Naive thymus-derived CD4-positive, alpha-beta T cell (primary cell): ENCODE measurements at regions of chr10 and their contacts with region 1.

Region 1: DNA sequence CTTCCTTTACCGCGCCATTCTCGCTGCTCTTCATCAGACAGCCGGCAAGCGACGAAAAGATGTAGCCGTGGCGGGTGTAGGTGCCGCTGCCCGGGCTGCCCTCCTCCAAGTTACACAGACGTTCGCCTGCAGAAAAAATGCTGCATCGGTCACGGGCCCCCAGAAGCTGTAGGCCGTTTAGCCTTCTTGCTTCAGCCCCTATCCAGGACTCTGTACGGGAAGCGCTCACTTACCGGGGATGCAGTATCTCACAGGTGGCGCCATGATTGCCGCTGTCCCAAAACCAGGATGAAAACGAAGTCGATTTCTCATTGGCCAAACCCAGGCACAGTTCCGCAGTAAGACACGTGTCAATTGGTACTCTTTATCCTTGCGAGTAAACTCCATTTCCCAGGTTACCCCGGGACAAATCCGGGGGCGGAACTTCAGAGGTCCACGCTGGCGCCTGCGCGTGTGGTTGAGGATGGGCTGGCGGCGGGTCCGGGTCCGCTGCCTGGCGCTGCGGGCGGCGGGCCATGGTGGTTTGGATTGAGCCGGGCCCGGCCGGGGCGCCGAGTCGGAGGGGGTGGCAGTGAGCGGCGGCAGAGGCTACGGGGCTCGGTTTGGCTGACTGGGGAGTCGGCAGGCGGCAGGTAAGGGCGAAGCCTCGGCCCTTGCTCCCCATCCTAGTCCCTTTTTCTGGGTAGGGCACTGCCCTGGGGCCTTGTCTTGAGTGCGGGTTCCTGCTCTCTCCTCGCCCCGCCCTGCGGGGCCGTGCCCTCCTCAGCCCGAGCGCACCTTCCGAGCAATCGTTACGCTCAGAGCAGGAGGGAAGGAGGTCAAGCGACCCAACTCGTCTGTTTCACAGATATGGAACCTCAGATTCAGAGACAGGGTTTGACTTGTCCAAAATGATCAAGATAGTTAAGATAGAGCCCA is at the starts of genes EXOSC1 and ZDHHC16:
- DNase-seq: peak; percentile 67 to 93 (median 89)
- ATAC-seq: peak; percentile 99
- H3K4me3 ChIP-seq: peak within 1 kb of the TSS; percentile 98
- H3K4me3 Mint-ChIP-seq: peak within 1 kb of the TSS; percentile 89 to 99 (median 98)
- H3K27ac ChIP-seq: peak within 1 kb of the TSS; percentile 80
- H3K27ac Mint-ChIP-seq: peak within 1 kb of the TSS; percentile 86 to 97 (median 93)
- H3K4me1 ChIP-seq: peaks cover 19 to 29% of the 10 kb centered on the region in 2 donors
- H3K4me1 Mint-ChIP-seq: peaks cover 32 to 69% (median 44%) of the 10 kb centered on the region in 7 donors
- H3K27me3 ChIP-seq: no peaks in the 10 kb centered on the region
- H3K27me3 Mint-ChIP-seq: no peaks in the 10 kb centered on the region
- total RNA-seq, gene EXOSC1: 32.6 to 65.4 (median 53.2) TPM
- total RNA-seq, gene ZDHHC16: 13.2 to 38.8 (median 26.8) TPM

Region 2: DNA sequence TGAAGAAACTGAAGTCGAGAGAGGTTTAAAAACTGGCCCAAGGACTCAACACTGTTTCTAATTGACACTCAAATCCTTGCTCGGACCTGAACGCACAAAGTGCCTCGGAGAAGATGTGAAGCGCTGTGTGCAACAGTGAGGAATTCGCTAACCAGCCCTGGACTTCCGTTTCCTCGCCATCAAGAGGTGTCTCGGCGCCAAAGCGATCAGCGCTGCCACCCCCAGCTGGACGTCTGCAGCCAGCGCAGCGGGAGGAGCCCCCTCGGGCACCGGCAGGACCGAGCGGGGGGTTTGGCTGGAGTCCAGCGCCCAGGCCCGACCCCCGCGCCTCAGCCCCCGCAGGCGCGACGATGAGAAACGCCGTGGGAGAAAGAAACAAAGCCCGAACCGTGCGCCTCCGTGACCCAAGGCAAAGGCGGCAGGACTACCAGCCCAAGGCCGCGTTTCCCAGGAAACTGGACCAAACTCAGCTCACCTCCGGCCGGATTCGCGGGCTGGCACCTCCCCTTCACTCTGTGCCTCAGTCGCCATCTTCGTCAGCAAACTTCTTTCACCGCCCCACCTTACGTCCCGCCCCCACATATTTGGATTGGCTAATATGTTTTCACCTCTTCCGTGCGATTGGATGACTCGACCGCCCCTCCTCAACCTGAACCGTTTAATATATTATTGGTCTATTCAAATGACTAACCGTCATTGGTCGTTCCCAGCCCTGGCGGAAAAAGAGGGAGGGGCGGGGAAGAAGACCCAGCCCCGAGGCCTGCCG is 153.7 kb before region 1 on chr10 and contains the start of gene ARHGAP19:
- CTCF ChIA-PET with region 1: no interaction called
- POLR2A ChIA-PET with region 1: no interaction called
- intact Hi-C with region 1: loop called (anchors 1 kb)
- DNase-seq: peak; percentile 65 to 97 (median 95)
- ATAC-seq: peak; percentile 100
- H3K4me3 ChIP-seq: peak within 1 kb of the TSS; percentile 88
- H3K4me3 Mint-ChIP-seq: peak within 1 kb of the TSS; percentile 83 to 97 (median 95)
- H3K27ac ChIP-seq: peak within 1 kb of the TSS; percentile 83
- H3K27ac Mint-ChIP-seq: peak within 1 kb of the TSS; percentile 32 to 98 (median 92)
- H3K4me1 ChIP-seq: peaks cover 4 to 8% of the 10 kb centered on the region in 2 donors
- H3K4me1 Mint-ChIP-seq: peaks cover 17 to 26% (median 24%) of the 10 kb centered on the region in 7 donors
- H3K27me3 ChIP-seq: no peaks in the 10 kb centered on the region
- H3K27me3 Mint-ChIP-seq: peaks cover 0 to 4% (median 0%) of the 10 kb centered on the region in 5 donors
- total RNA-seq, gene ARHGAP19: 12.8 to 40.1 (median 16.1) TPM

Region 3: DNA sequence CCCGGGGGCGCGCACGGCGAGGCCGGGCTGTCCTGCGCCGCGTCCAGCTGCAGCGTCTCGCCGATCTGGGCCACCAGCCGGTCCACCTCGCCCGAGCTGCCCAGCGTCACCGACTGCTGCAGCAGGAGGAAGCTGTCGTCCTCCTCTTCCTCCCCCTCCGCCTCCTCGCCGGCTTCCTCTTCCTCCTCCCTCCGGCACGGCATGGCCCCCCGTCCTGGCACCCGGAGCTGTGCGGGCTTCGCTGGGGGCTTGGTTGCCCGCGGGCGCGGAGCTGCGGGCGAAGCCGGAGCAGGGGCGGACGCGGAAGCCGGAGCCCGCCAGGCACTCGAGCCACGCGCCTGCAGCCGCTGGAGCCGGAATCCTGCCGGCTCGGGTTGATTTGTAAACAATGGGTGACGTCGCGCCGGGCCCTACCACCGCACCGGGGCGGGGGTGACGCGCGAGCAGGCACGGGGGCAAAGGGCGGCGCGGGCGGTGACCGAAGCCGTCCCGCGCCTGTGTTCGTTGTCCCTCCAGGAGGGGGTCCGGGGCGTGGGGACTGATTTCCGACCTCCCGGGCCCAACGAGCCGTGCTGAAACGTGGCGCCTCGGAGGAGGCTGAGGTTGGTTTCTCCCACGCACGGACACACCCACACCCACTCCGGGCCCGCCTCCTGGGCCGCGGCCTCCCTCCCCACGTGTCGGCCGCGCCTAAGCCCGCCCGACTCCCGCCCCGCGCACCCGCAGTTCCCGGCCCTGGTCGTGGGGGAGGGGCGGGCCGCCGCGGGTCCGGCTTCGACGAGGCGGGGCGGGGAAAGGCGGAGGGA is 111.4 kb before region 1 on chr10 and contains the start of gene FRAT2:
- CTCF ChIA-PET with region 1: no interaction called
- POLR2A ChIA-PET with region 1: no interaction called
- intact Hi-C with region 1: loop called in 1 of 2 experiments (anchors 5 kb)
- DNase-seq: peak; percentile 85 to 96 (median 92)
- ATAC-seq: peak; percentile 94
- H3K4me3 ChIP-seq: peak within 1 kb of the TSS; percentile 78
- H3K4me3 Mint-ChIP-seq: peak within 1 kb of the TSS; percentile 88 to 98 (median 94)
- H3K27ac ChIP-seq: peak within 1 kb of the TSS; percentile 97
- H3K27ac Mint-ChIP-seq: peak within 1 kb of the TSS; percentile 89 to 97 (median 93)
- H3K4me1 ChIP-seq: peaks cover 20 to 24% of the 10 kb centered on the region in 2 donors
- H3K4me1 Mint-ChIP-seq: peaks cover 28 to 48% (median 42%) of the 10 kb centered on the region in 7 donors
- H3K27me3 ChIP-seq: no peaks in the 10 kb centered on the region
- H3K27me3 Mint-ChIP-seq: peaks cover 0 to 36% (median 0%) of the 10 kb centered on the region in 5 donors
- total RNA-seq, gene FRAT2: 9.3 to 39.7 (median 29.8) TPM

Region 4: DNA sequence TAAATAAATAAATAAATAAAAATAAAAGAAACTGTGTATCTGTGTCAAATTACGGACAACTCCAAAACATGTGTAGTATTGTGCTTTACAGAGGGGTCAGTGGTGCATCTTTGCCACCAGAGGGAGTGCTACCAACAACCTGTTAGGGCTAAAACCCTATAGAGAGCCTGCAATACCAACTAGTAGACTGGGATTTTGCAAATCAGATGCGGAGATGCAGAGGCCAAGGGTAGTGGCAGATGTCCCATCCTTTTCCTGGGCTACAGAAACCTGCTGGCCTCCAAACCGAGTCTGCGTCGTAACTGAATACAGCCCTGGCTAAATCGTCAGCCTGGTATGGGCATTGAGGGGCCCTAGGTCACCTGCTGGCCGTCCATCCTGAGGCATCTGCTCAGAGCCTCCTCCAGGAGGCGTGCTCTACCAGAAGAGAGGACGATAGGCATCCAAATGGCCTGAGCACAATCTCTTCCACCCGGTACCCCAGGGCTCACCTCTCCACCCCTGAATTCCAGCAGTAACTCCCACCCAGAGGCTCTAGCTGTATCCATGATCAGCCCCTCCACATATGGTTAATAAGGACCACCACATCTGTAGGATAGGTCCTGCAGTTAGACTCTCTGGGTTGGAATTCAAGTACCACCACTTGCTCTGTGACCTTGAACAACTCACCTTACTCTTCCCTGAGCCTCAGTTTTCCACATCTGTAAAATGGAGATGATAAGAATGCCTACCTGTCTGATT is 38.6 kb before region 1 on chr10:
- CTCF ChIA-PET with region 1: interaction called, 5 read pairs
- POLR2A ChIA-PET with region 1: interaction called, 3 read pairs
- intact Hi-C with region 1: loop called (anchors 1 kb)
- DNase-seq: peak; percentile 35 to 78 (median 69)
- ATAC-seq: peak; percentile 96
- H3K4me3 ChIP-seq: peak overlapping the region; percentile 40
- H3K4me3 Mint-ChIP-seq: peak overlapping the region; percentile 10 to 79 (median 52)
- H3K27ac ChIP-seq: peak overlapping the region; percentile 54
- H3K27ac Mint-ChIP-seq: peak overlapping the region in 8 of 9 donors; percentile 14 to 84 (median 44)
- H3K4me1 ChIP-seq: peaks cover 4 to 7% of the 10 kb centered on the region in 2 donors
- H3K4me1 Mint-ChIP-seq: peaks cover 0 to 13% (median 9%) of the 10 kb centered on the region in 7 donors
- H3K27me3 ChIP-seq: no peaks in the 10 kb centered on the region
- H3K27me3 Mint-ChIP-seq: no peaks in the 10 kb centered on the region

Region 5: GRCh38 chr10:97434055-97434454 is 11.9 kb before region 1 on chr10:
- CTCF ChIA-PET with region 1: interaction called, 4 read pairs
- POLR2A ChIA-PET with region 1: interaction called, 4 read pairs
- intact Hi-C with region 1: loop called in 1 of 2 experiments (anchors 1 kb)
- DNase-seq: no peak
- ATAC-seq: no peak
- H3K4me3 ChIP-seq: no peak overlapping the region
- H3K4me3 Mint-ChIP-seq: no peak overlapping the region
- H3K27ac ChIP-seq: no peak overlapping the region
- H3K27ac Mint-ChIP-seq: peak overlapping the region in 2 of 9 donors; percentile 39 to 71
- H3K4me1 ChIP-seq: peaks cover 0 to under 1% of the 10 kb centered on the region in 2 donors
- H3K4me1 Mint-ChIP-seq: peaks cover 0 to 18% (median 0%) of the 10 kb centered on the region in 7 donors
- H3K27me3 ChIP-seq: no peaks in the 10 kb centered on the region
- H3K27me3 Mint-ChIP-seq: no peaks in the 10 kb centered on the region

Region 6: GRCh38 chr10:97632949-97633884 is 187.2 kb after region 1 on chr10 and contains the start of gene MORN4:
- CTCF ChIA-PET with region 1: no interaction called
- POLR2A ChIA-PET with region 1: no interaction called
- intact Hi-C with region 1: loop called in 1 of 2 experiments (anchors 1 kb)
- DNase-seq: peak; percentile 82 to 94 (median 92)
- ATAC-seq: peak; percentile 100
- H3K4me3 ChIP-seq: peak within 1 kb of the TSS; percentile 91
- H3K4me3 Mint-ChIP-seq: peak within 1 kb of the TSS; percentile 92 to 100 (median 98)
- H3K27ac ChIP-seq: peak within 1 kb of the TSS; percentile 50
- H3K27ac Mint-ChIP-seq: peak within 1 kb of the TSS; percentile 82 to 96 (median 92)
- H3K4me1 ChIP-seq: peaks cover 0 to 10% of the 10 kb centered on the region in 2 donors
- H3K4me1 Mint-ChIP-seq: peaks cover 10 to 18% (median 16%) of the 10 kb centered on the region in 7 donors
- H3K27me3 ChIP-seq: no peaks in the 10 kb centered on the region
- H3K27me3 Mint-ChIP-seq: no peaks in the 10 kb centered on the region
- total RNA-seq, gene MORN4: 0.78 to 4.1 (median 1.5) TPM